ENCODE measurements at regions of chr12 and their contacts with region 1.

Region 1: GRCh38 chr12:105107494-105108371 is at the start of gene WASHC4:
- DNase-seq: peak; percentile 97
- ATAC-seq: peak; percentile 96
- H3K4me3 Mint-ChIP-seq: peak within 1 kb of the TSS; percentile 93
- H3K27ac Mint-ChIP-seq: peak within 1 kb of the TSS; percentile 88
- H3K4me1 Mint-ChIP-seq: peaks cover 33% of the 10 kb centered on the region
- H3K27me3 Mint-ChIP-seq: peaks cover 13% of the 10 kb centered on the region
- total RNA-seq, gene WASHC4: 29.6 to 35.9 TPM

Region 2: DNA sequence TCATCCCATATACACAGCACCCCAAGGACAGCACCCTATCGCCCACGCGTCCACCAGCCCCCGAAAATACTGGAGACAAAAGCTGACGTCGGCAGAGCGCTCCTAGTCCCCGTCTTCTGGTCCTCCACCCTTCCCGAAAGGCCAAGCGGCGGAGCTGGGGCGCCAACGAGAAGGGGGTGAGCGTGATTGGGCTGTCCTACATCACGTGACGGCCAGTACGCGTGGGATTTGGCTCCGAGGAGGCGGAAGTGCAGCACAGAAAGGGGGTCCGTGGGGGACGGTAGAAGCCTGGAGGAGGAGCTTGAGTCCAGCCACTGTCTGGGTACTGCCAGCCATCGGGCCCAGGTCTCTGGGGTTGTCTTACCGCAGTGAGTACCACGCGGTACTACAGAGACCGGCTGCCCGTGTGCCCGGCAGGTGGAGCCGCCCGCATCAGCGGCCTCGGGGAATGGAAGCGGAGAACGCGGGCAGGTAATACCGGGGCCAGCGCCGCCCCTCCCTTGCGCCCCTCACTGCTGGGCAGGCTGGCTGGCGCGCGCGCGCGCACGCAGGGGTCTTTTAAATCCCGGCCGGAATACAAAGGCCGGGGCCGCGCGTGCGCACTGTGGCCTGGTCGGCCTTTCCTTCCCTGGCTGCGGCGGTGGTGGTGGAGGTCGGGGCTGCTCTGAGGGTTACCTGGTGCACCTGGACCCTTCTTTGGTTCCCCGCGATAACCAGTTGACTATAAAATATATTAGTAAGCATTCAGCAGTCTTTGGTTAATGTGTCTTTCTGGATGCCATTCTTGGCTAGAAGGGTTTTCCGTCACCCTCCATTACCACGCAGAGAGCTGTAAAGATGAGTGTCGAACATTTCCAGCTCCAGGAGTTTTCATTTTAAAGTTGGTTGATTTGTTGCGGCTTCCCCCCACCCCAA is 1141.9 kb before region 1 on chr12 and contains the start of gene TDG:
- CTCF ChIA-PET with region 1: no interaction called
- POLR2A ChIA-PET with region 1: no interaction called
- intact Hi-C with region 1: loop called in 1 of 2 experiments (anchors 1 kb)
- DNase-seq: peak; percentile 99
- ATAC-seq: peak; percentile 94
- H3K4me3 Mint-ChIP-seq: peak within 1 kb of the TSS; percentile 94
- H3K27ac Mint-ChIP-seq: peak within 1 kb of the TSS; percentile 98
- H3K4me1 Mint-ChIP-seq: peaks cover 48% of the 10 kb centered on the region
- H3K27me3 Mint-ChIP-seq: no peaks in the 10 kb centered on the region
- total RNA-seq, gene TDG: 35.4 to 37.2 TPM

Region 3: DNA sequence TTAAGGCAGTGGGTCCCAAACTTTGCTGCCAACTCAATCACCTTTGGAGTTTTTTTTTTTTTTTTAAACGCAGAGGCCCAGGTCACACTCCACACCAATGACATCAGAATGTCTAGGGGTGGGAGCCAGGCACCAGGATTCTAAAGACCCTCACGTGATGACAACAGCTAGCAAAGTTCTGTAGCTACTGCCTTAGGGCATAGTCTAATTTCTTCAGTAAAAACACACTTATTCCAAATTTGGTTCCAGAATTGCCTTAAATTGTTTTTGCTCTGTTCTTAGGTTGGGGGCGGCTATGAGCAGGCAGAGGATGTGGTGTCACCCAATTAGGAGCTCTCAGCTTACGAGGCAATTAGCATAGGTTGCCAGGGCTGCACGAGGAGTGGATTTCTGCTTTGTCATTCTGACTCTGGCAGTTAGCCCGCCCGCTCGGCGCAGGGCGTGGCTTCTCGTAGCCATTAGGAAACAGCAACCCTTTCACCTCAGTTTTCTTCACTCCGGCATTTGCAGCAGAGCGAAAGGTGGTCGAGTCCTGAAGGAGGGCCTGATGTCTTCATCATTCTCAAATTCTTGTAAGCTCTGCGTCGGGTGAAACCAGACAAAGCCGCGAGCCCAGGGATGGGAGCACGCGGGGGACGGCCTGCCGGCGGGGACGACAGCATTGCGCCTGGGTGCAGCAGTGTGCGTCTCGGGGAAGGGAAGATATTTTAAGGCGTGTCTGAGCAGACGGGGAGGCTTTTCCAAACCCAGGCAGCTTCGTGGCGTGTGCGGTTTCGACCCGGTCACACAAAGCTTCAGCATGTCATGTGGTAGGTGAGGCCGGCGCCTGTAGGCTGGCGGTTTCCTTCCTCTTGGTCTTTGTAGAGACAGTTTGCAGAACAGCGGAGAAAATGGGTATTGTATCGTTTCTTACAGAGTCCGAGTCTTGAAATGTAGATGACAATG is 820.9 kb before region 1 on chr12:
- CTCF ChIA-PET with region 1: interaction called, 5 read pairs
- POLR2A ChIA-PET with region 1: no interaction called
- intact Hi-C with region 1: loop called (anchors 1 to 5 kb)
- DNase-seq: peak; percentile 95
- ATAC-seq: peak; percentile 84
- H3K4me3 Mint-ChIP-seq: peak overlapping the region; percentile 95
- H3K27ac Mint-ChIP-seq: peak overlapping the region; percentile 97
- H3K4me1 Mint-ChIP-seq: peaks cover 12% of the 10 kb centered on the region
- H3K27me3 Mint-ChIP-seq: no peaks in the 10 kb centered on the region

Region 4: GRCh38 chr12:104784592-104784991 is 323.1 kb before region 1 on chr12:
- CTCF ChIA-PET with region 1: no interaction called
- POLR2A ChIA-PET with region 1: no interaction called
- intact Hi-C with region 1: no loop called
- DNase-seq: no peak
- ATAC-seq: no peak
- H3K4me3 Mint-ChIP-seq: no peak overlapping the region
- H3K27ac Mint-ChIP-seq: no peak overlapping the region
- H3K4me1 Mint-ChIP-seq: no peaks in the 10 kb centered on the region
- H3K27me3 Mint-ChIP-seq: peaks cover 2% of the 10 kb centered on the region

Region 5: DNA sequence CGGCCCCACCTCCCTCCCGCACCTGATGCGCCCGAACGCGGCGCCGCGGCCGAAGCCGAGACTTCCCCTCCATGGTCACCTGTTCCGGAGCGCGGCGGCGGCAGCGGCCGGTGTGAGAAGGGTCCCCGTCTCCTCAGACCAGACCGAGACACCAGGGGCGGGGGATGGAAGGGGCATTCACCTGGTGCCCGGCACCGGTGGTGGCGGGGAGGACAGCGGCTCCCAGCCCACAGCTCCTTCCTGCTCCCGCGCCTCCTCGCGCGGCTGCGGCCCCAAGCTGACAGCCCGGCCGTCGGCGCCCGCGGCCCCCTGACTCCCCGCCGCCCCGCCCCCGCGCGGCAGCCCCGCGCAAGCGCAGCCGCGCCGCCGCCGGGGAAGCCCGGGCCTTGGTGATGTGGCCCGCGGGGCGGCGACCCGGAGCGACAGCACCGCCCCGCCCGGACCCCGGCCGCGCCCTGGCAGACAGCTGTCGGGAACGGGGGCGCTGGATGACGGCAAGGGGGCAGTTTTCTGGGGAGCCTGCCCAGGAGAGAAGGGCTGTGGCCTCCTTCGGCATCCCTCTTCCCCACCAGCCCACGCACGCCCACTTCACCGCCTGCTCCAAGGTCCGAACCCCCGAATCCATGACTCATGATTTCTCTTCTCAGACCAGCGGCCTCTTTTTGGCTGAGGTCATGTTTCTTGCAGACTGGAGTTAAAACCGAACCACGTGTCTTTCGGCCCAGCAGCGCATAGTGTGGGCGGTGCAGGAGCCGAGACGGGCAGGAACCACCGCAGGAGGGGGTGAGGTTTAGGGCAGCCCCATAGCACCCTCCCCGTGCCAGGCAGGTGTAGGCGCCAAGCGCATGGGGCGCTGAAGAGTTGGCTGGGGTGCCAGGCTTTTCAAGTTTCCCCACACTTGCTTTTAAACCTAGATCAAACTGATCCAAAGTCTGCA is 149.5 kb before region 1 on chr12 and contains the start of gene SLC41A2:
- CTCF ChIA-PET with region 1: no interaction called
- POLR2A ChIA-PET with region 1: no interaction called
- intact Hi-C with region 1: loop called (anchors 1 to 5 kb)
- DNase-seq: peak; percentile 90
- ATAC-seq: peak; percentile 86
- H3K4me3 Mint-ChIP-seq: peak within 1 kb of the TSS; percentile 82
- H3K27ac Mint-ChIP-seq: peak within 1 kb of the TSS; percentile 92
- H3K4me1 Mint-ChIP-seq: peaks cover 27% of the 10 kb centered on the region
- H3K27me3 Mint-ChIP-seq: peaks cover 21% of the 10 kb centered on the region
- total RNA-seq, gene SLC41A2: 7.9 to 11.1 TPM

Region 6: GRCh38 chr12:105201299-105201698 is 93.6 kb after region 1 on chr12:
- CTCF ChIA-PET with region 1: no interaction called
- POLR2A ChIA-PET with region 1: no interaction called
- intact Hi-C with region 1: no loop called
- DNase-seq: no peak
- ATAC-seq: no peak
- H3K4me3 Mint-ChIP-seq: no peak overlapping the region
- H3K27ac Mint-ChIP-seq: no peak overlapping the region
- H3K4me1 Mint-ChIP-seq: peaks cover 21% of the 10 kb centered on the region
- H3K27me3 Mint-ChIP-seq: no peaks in the 10 kb centered on the region

Region 7: DNA sequence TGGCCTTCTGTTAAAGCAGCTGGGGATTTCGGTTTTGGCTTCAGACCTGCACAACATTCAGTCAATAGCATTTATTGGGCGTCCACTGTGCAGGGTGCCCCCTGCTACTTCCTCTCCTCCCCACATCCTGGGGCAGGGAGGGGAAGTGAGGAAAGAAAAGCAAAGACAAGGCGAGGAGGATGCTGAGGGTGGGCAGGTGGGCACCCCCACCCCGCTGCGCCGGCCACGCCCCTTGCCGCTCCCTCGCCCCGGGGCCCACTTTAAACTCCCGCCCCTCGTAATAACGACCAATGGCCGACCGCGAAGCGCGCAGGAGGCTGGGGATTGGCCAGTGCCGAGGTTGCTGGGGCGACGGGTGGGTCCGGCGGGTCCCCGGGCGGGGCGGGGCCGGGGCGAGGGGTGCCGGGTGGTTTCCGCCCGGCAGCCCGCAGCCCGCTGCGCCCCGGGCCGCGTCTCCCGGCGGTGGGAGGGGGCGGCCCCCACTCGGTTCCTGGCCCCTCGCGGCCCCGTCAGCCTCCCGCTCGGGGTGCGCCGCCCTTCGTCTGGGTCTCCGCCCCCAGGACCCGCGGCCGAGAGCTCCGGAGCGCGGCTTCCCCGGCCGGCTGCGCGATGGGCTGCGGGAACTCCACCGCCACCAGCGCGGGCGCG is 222.7 kb after region 1 on chr12 and contains the start of gene C12orf75:
- CTCF ChIA-PET with region 1: no interaction called
- POLR2A ChIA-PET with region 1: no interaction called
- intact Hi-C with region 1: loop called in 1 of 2 experiments (anchors 1 kb)
- DNase-seq: peak; percentile 92
- ATAC-seq: peak; percentile 92
- H3K4me3 Mint-ChIP-seq: peak within 1 kb of the TSS; percentile 78
- H3K27ac Mint-ChIP-seq: peak within 1 kb of the TSS; percentile 80
- H3K4me1 Mint-ChIP-seq: peaks cover 39% of the 10 kb centered on the region
- H3K27me3 Mint-ChIP-seq: no peaks in the 10 kb centered on the region
- total RNA-seq, gene C12orf75: 53.8 to 59.9 TPM

Region 8: DNA sequence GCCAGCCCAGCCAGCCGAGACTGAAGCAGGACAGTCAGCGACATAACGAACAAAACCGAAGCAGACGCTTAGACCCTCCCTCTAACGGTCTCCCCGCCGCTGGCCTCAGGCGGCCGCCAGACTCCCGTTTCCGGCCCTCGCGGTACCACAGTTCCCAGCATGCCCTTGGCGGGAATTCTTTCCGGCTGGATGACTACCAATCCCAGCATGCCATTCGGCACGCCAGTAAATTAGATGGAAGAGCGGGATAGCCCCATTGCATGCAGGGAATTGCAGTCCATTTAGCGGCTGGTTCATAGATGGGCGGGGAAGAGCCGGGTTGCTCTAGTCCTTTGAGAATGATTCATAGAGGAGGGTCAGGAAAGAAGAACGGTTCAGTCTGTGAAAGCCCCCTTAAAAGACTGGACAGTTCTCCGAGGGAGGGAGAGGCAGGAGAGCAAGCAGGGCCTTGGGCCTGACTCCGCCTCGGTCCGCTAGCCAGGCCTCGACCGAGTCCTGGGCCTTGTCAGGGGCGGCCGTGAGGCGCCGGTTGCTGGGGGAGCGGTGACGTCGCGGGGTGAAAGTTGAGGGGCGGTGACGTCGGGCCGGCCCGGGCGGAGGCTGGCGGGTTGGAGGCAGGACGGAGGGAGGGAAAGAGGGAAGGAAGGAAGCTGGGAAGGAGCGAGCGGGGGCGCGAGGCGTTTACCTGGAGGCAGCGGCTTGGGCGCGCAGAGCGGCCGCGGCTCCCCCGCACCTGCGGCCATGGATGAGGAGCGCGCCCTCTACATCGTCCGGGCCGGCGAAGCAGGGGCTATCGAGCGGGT is 1666.5 kb after region 1 on chr12 and contains the start of gene RIC8B:
- CTCF ChIA-PET with region 1: no interaction called
- POLR2A ChIA-PET with region 1: no interaction called
- intact Hi-C with region 1: loop called in 1 of 2 experiments (anchors 5 kb)
- DNase-seq: peak; percentile 89
- ATAC-seq: peak; percentile 92
- H3K4me3 Mint-ChIP-seq: peak within 1 kb of the TSS; percentile 95
- H3K27ac Mint-ChIP-seq: peak within 1 kb of the TSS; percentile 98
- H3K4me1 Mint-ChIP-seq: peaks cover 32% of the 10 kb centered on the region
- H3K27me3 Mint-ChIP-seq: no peaks in the 10 kb centered on the region
- total RNA-seq, gene RIC8B: 10.7 to 11.3 TPM

Measured in activated CD4-positive, alpha-beta T cell treated with anti-CD3 and anti-CD28 coated beads for 36 hours (primary cell).